ENCODE measurements at regions of chr21 and their contacts with region 1.

Region 1: GRCh38 chr21:42117229-42117966 is 46.3 kb downstream of the UMODL1 start:
- DNase-seq: no peak
- H3K4me3 ChIP-seq: peak overlapping the region in 1 of 4 donors; percentile 17
- H3K27ac ChIP-seq: no peak overlapping the region
- H3K4me1 ChIP-seq: peaks cover 8 to 19% (median 11%) of the 10 kb centered on the region in 4 donors
- H3K27me3 ChIP-seq: peaks cover 0 to 75% (median 9%) of the 10 kb centered on the region in 4 donors
- CTCF ChIP-seq: peak; percentile 92 to 99 (median 94)
- EP300 ChIP-seq: no peak
- POLR2A ChIP-seq: no peak

Region 2: GRCh38 chr21:41933313-41934086 is 183.9 kb before region 1 on chr21:
- intact Hi-C with region 1: loop called (anchors 10 kb)
- DNase-seq: no peak
- H3K4me3 ChIP-seq: peak overlapping the region; percentile 39 to 51 (median 45)
- H3K27ac ChIP-seq: peak overlapping the region; percentile 52 to 78 (median 65)
- H3K4me1 ChIP-seq: peaks cover 17 to 31% (median 23%) of the 10 kb centered on the region in 4 donors
- H3K27me3 ChIP-seq: no peaks in the 10 kb centered on the region
- CTCF ChIP-seq: peak in 1 of 3 experiments; percentile 29
- EP300 ChIP-seq: no peak
- POLR2A ChIP-seq: no peak

Region 3: GRCh38 chr21:42080788-42081083 is 36.7 kb before region 1 on chr21:
- intact Hi-C with region 1: no loop called
- DNase-seq: no peak
- H3K4me3 ChIP-seq: no peak overlapping the region
- H3K27ac ChIP-seq: no peak overlapping the region
- H3K4me1 ChIP-seq: no peaks in the 10 kb centered on the region
- H3K27me3 ChIP-seq: peaks cover 0 to 31% (median 0%) of the 10 kb centered on the region in 4 donors
- CTCF ChIP-seq: no peak
- EP300 ChIP-seq: no peak
- POLR2A ChIP-seq: no peak

Region 4: DNA sequence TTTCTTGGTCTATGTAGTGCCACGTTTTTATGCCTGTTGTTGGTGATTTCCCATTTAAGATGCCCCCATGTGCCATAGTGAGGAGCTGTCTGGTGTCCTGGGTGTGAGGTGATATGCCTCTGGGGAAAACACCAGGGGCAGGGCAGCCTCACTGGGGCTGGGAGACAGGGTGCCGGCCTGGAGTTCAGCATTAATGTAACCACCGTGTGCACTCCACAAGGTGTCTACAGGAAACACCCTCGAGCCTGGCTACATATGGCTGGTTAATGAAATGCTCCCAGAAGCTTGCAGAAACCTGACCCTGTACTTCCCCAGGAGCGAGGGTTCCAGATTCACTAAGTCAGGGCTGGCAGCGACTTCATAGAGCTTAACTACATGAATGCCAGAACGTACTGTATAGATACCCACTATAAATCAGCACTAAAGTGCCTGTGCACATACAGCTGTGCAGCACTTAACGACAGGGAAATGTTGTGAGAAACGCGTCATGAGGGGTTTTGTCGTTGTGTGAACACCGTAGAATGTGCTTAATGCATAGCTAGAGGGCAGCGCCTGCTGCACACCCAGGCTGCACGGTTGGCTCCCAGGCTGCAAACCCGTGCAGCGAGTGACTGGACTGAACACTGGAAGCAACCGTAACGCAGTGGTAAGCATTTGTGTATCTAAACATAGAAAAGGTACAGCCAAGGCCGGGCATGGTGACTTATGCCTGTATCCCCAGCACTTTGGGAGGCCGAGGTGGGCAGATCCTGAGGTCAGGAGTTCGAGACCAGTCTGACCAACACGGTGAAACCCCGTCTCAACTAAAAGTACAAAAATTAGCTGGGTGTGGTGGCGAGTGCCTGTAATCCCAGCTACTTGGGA is 223.0 kb after region 1 on chr21:
- intact Hi-C with region 1: no loop called
- DNase-seq: no peak
- H3K4me3 ChIP-seq: no peak overlapping the region
- H3K27ac ChIP-seq: no peak overlapping the region
- H3K4me1 ChIP-seq: peaks cover 0 to 14% (median 9%) of the 10 kb centered on the region in 4 donors
- H3K27me3 ChIP-seq: peaks cover 0 to 3% (median 1%) of the 10 kb centered on the region in 4 donors
- CTCF ChIP-seq: no peak
- EP300 ChIP-seq: no peak
- POLR2A ChIP-seq: no peak

Region 5: GRCh38 chr21:42486531-42486930 is 369.1 kb after region 1 on chr21:
- intact Hi-C with region 1: no loop called
- DNase-seq: no peak
- H3K4me3 ChIP-seq: no peak overlapping the region
- H3K27ac ChIP-seq: no peak overlapping the region
- H3K4me1 ChIP-seq: peaks cover 0 to 15% (median 6%) of the 10 kb centered on the region in 4 donors
- H3K27me3 ChIP-seq: no peaks in the 10 kb centered on the region
- CTCF ChIP-seq: no peak
- EP300 ChIP-seq: no peak
- POLR2A ChIP-seq: no peak